Gastrocnemius medialis (tissue), 4 donors: ENCODE measurements at regions of chr1 and their contacts with region 1.

Region 1: GRCh38 chr1:182143154-182143657 is 81.7 kb upstream of the ZNF648 start:
- DNase-seq: peak; percentile 89 to 91
- ATAC-seq: peak; percentile 62 to 72
- H3K4me3 ChIP-seq: no peak overlapping the region
- H3K27ac ChIP-seq: peak overlapping the region; percentile 94 to 98 (median 96)
- H3K4me1 ChIP-seq: peaks cover 27 to 28% of the 10 kb centered on the region in 2 donors
- H3K27me3 ChIP-seq: no peaks in the 10 kb centered on the region
- CTCF ChIP-seq: peak; percentile 96 to 99 (median 98)
- POLR2A ChIP-seq: no peak

Region 2: GRCh38 chr1:181947441-181947840 is 195.8 kb before region 1 on chr1:
- in situ Hi-C with region 1: no loop called
- intact Hi-C with region 1: no loop called
- DNase-seq: no peak
- ATAC-seq: no peak
- H3K4me3 ChIP-seq: no peak overlapping the region
- H3K27ac ChIP-seq: no peak overlapping the region
- H3K4me1 ChIP-seq: no peaks in the 10 kb centered on the region
- H3K27me3 ChIP-seq: no peaks in the 10 kb centered on the region
- CTCF ChIP-seq: no peak
- POLR2A ChIP-seq: no peak

Region 3: GRCh38 chr1:182111496-182111895 is 31.7 kb before region 1 on chr1:
- in situ Hi-C with region 1: no loop called
- intact Hi-C with region 1: no loop called
- DNase-seq: no peak
- ATAC-seq: no peak
- H3K4me3 ChIP-seq: no peak overlapping the region
- H3K27ac ChIP-seq: no peak overlapping the region
- H3K4me1 ChIP-seq: peaks cover 0 to 3% of the 10 kb centered on the region in 2 donors
- H3K27me3 ChIP-seq: no peaks in the 10 kb centered on the region
- CTCF ChIP-seq: no peak
- POLR2A ChIP-seq: no peak

Region 4: GRCh38 chr1:182206626-182207239 is 63.5 kb after region 1 on chr1:
- in situ Hi-C with region 1: no loop called
- intact Hi-C with region 1: loop called (anchors 2 kb)
- DNase-seq: peak; percentile 80 to 92
- ATAC-seq: peak; percentile 76 to 83
- H3K4me3 ChIP-seq: no peak overlapping the region
- H3K27ac ChIP-seq: peak overlapping the region; percentile 74 to 93 (median 87)
- H3K4me1 ChIP-seq: peaks cover 25 to 29% of the 10 kb centered on the region in 2 donors
- H3K27me3 ChIP-seq: no peaks in the 10 kb centered on the region
- CTCF ChIP-seq: no peak
- POLR2A ChIP-seq: peak; percentile 36 to 68

Region 5: GRCh38 chr1:182301467-182302198 is 158.4 kb after region 1 on chr1:
- in situ Hi-C with region 1: loop called in 1 of 4 experiments (anchors 10 kb)
- intact Hi-C with region 1: no loop called
- DNase-seq: peak in 1 of 2 donors; percentile 38
- ATAC-seq: peak in 1 of 2 donors; percentile 65
- H3K4me3 ChIP-seq: no peak overlapping the region
- H3K27ac ChIP-seq: peak overlapping the region; percentile 18 to 38 (median 28)
- H3K4me1 ChIP-seq: peaks cover 7 to 27% of the 10 kb centered on the region in 2 donors
- H3K27me3 ChIP-seq: no peaks in the 10 kb centered on the region
- CTCF ChIP-seq: no peak
- POLR2A ChIP-seq: no peak

Region 6: DNA sequence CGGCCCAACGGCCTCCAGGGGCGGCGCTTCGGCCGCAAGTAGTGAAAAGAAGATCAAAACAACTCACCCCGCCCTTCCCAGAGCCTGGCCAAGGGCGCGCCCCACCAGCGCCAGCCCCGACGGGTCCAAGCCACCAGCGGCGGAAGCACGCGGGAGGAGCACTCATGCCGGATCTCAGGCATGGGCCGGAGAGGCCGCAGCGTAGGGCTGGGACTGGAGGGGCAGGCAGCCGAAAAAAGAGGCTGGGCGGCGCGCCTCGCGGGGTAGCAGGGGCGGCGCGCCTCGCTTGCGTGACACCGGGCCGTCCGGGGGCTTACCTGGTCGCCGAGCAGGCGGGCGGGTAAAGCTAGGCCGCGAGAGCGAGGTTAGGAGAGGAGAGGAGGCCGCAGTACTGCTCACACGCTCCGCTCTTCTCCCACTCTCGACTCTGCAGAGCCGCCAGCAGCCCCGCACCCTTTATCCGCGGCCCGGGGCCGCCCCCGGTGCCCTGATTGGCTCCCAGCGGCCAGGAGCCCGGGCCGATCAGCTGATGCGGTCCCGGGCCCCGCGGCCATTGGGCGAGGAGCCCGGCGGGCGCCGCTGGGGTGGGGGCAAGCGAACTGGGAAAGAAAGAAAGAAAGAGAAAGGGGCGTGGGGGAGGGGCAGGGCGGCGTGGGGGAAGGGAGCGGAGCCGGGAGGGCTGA is 248.3 kb after region 1 on chr1 and contains the start of gene GLUL:
- in situ Hi-C with region 1: loop called in 3 of 4 experiments (anchors 5 kb)
- intact Hi-C with region 1: loop called (anchors 1 kb)
- DNase-seq: peak; percentile 94 to 96
- ATAC-seq: peak; percentile 74 to 80
- H3K4me3 ChIP-seq: peak within 1 kb of the TSS; percentile 77 to 90 (median 82)
- H3K27ac ChIP-seq: peak within 1 kb of the TSS; percentile 94 to 99 (median 97)
- H3K4me1 ChIP-seq: peaks cover 25 to 31% of the 10 kb centered on the region in 2 donors
- H3K27me3 ChIP-seq: no peaks in the 10 kb centered on the region
- CTCF ChIP-seq: no peak
- POLR2A ChIP-seq: peak; percentile 100
- total RNA-seq, gene GLUL: 4,746 to 22,010 (median 11,052) TPM

Region 7: GRCh38 chr1:182493063-182493462 is 349.9 kb after region 1 on chr1:
- in situ Hi-C with region 1: no loop called
- intact Hi-C with region 1: no loop called
- DNase-seq: no peak
- ATAC-seq: no peak
- H3K4me3 ChIP-seq: no peak overlapping the region
- H3K27ac ChIP-seq: no peak overlapping the region
- H3K4me1 ChIP-seq: no peaks in the 10 kb centered on the region
- H3K27me3 ChIP-seq: no peaks in the 10 kb centered on the region
- CTCF ChIP-seq: no peak
- POLR2A ChIP-seq: no peak

Region 8: DNA sequence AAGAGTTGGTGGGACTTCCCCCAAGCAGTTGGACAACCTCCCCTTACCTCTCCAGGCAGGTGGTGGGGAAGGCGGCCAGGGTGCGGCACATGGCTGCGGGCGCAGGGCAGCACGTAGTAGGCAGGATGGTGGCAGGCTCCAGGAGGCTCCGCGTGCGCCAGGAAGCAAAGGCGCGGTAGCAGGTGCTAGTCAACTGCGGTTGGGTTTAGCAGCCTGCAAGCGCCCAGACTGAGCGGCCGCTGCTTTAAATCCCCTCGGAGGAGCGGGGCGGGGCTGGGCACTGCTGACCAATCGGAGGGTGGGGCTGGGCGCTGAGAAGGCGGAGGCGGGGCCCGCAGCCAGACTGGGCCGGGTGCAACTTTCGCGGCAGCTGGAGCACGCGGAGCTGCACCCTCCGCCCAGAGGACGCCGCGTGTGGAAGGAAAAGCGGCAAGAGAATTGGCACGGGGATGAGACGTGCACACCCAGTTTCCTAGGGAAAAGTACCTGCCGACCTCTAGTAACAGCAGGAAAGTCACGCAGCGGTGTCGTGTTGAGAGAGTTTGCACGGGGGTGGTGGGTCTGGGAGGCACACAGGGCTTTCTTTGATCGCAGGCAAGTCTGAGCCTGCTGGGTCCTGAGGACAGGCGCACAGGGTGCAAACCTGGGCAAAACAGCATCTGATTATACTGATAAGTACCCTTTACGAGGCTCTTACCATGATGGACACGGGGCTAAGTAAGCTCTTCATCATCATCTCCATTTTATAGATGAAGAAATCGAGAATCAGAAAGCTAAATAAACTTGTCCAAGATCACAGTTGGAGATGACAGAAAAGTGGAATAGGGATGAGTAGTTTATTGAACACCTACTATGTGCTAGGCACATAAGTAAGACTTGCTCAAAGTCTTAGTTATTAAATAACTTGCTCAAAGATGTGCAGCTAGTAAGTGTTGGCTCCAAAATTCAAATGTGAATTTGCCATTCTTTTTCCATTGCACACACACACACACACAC is 461.3 kb after region 1 on chr1 and contains the start of gene RGS16:
- in situ Hi-C with region 1: no loop called
- intact Hi-C with region 1: loop called (anchors 10 kb)
- DNase-seq: peak; percentile 86 to 90
- ATAC-seq: peak; percentile 85 to 86
- H3K4me3 ChIP-seq: peak within 1 kb of the TSS; percentile 52 to 68 (median 54)
- H3K27ac ChIP-seq: peak within 1 kb of the TSS; percentile 59 to 66 (median 63)
- H3K4me1 ChIP-seq: peaks cover 33 to 36% of the 10 kb centered on the region in 2 donors
- H3K27me3 ChIP-seq: no peaks in the 10 kb centered on the region
- CTCF ChIP-seq: no peak
- POLR2A ChIP-seq: peak; percentile 70 to 92
- total RNA-seq, gene RGS16: 0.41 to 0.98 (median 0.52) TPM in 3 of 4 donors, not detected in the other